Right ventricle myocardium inferior (tissue), 1 donor: ENCODE measurements at regions of chr22 and their contacts with region 1.

Region 1: GRCh38 chr22:21938071-21938822 is 14.4 kb downstream of the PPM1F start:
- DNase-seq: peak; percentile 96
- ATAC-seq: peak; percentile 94

Region 2: GRCh38 chr22:21712894-21713712 is 225.1 kb before region 1 on chr22:
- intact Hi-C with region 1: loop called (anchors 1 kb)
- DNase-seq: no peak
- ATAC-seq: peak; percentile 93

Region 3: GRCh38 chr22:21778705-21779363 is 159.4 kb before region 1 on chr22:
- intact Hi-C with region 1: loop called (anchors 2 kb)
- DNase-seq: no peak
- ATAC-seq: no peak

Region 4: GRCh38 chr22:21952586-21953571 is 14.6 kb after region 1 on chr22 and contains the start of gene PPM1F:
- intact Hi-C with region 1: loop called (anchors 2 kb)
- DNase-seq: peak; percentile 94
- ATAC-seq: peak; percentile 90
- total RNA-seq, gene PPM1F: 18.9 TPM